ENCODE measurements at regions of chr1 and their contacts with region 1.

Region 1: DNA sequence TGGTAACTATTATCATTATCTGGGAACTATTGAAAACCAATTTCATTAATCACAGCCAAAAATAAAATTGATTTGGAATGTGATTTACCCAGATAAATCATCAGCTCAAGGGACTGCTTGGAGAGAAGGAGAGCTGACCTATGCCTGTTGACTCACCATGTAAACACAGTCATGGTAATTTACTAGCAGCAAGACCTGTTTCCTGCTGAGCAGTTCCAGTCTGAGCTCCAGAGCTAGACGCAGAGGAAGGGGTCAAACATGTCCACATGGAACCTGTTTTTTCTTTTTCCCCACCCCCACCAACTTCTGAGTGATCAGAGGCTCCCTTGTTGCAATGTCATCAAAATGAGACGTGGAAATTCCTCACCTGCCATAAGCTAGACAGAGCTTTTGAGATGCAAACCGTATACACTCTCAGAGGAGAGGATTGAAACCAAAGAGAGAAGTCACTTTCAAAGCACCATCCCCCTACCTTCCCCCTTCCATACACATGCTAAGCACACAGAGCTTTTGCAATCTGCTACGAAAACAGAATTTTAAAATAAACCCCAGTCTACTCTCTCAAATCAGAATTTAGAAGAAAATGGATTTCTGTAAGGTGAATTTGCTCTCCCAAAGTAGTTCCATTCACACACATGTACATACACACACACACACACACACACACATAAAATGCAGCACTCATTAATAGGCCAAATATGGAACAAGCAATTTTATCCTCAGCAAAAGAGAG is 55.9 kb upstream of the PTGFRN start:
- DNase-seq: no peak
- ATAC-seq: peak in 1 of 2 donors; percentile 73

Region 2: DNA sequence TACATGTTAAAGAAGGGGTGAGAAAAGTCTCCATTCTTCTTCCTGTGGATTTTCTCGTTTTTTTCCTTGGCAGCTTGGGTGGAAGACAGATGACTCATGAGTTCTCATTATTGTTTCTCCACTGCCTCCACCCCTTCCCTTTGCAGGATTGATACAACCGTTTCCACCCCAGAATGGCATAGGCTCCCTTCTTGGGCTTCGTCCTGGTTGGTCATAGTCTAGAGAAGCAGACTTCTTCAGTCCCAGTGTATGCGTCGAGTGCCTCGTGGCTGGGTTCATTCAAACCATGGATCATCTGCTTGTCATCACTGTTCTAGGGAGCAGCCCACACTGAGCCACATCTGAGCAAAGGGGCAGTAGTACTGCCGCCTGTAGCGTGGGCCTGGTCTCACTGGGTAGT is 69.6 kb after region 1 on chr1:
- intact Hi-C with region 1: no loop called
- DNase-seq: no peak
- ATAC-seq: peak in 1 of 2 donors; percentile 62

Region 3: DNA sequence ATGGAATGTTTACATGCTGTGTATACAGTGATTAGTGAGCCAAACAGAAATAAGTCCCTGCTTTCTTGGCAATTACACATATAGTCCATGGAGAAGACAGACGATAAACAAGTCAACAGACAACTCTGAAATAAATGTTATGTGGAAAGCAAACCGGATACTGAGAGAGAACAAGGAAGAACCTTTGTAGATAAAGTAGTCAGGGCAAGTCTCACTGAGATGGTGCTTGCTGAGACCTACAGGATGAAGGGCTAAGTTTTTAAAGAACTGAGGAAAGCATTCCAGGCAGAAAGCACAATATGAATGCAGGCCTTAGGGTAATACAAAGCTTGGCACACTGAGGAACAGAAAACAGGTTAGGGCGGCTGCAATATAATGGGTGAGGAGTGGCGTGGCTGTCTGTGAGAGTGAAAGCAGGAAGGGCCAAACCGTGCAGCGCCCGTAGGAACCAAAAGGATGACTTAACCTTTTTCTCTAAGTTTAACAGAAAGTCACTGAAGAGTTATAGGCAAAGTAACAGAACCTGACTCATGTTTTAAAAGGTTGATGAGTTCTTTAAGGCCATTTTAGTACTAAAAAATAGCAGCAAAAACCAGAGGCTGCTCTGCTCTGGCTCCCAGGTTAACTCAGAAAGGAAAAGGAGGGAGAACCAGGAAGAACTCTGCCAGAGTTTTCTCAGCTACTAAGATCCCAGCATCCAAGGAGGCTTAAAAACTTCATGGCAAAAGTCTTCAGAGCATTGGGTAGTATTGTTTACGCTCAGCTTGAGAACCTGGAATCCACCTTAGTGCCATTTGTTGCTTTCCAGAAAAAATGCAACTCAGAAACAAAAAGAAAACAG is 197.6 kb after region 1 on chr1:
- intact Hi-C with region 1: loop called (anchors 1 to 5 kb)
- DNase-seq: no peak
- ATAC-seq: peak; percentile 54 to 57

Region 4: GRCh38 chr1:117180147-117180967 is 326.5 kb after region 1 on chr1:
- intact Hi-C with region 1: no loop called
- DNase-seq: no peak
- ATAC-seq: peak; percentile 19 to 88